ENCODE measurements at regions of chr6 and their contacts with region 1.

Region 1: DNA sequence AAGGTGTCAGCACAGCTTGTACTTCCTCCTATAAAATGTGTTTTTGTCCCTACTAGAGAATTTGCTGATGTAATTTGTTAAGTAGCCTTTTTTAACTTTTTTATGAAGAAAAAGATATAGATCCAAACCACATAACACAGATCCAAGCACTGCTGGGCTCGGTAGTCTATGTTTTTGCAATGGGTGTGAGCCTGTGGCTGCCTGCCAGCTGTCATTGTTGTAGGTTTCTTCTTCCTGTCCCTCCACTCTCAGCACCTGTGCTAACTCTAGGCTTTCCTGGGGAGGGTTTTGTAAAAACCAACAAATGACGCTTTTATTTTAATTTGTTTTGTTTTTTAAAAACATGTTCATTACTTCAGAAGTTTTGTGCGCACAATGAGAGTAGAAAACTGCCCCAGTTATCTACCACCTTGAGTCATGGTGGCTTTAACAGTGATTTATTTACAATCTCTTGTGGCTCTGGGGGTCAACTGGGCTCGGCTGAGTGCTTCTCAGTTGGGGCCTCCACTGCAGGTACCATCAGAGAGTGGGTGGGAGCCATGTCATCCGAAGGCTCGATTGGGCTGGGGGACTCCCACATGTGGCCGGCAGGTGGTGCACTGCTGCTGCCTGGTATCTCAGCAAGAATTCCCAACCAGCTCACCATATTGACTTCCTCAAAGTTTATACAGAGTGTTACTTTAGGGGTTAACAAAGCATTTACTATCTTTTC is 3.1 kb upstream of the CCR6 start:
- DNase-seq: no peak
- ATAC-seq: no peak
- H3K4me3 ChIP-seq: no peak overlapping the region
- H3K27ac ChIP-seq: peak overlapping the region; percentile 66; the same call in 1 of the 2 replicates
- H3K4me1 ChIP-seq: peaks cover 69% of the 10 kb centered on the region
- H3K27me3 ChIP-seq: no peaks in the 10 kb centered on the region
- CTCF ChIP-seq: peak; percentile 18 to 58 (median 56); a peak in 5 of 6 replicates
- EP300 ChIP-seq: no peak
- POLR2A ChIP-seq: no peak
- RAD21 ChIP-seq: peak; percentile 30

Region 2: DNA sequence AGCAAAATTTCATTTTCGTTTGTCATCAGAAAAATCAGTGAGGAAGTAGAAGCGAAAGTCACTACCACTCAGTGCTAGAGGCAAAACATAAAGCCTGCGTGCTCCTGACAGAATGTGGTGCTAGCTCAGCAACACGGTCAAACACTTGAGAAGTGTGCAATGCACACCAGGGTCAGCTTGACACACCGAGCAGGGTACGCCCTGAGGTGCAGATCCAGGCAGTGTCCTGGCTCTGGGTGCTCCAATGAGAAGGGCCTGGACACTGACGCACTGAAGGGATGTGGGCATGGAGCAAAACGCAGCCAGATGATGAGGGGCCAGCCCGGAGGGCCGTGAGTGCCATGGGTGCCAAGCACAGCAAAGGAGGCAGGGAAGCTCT is 169.4 kb before region 1 on chr6:
- CTCF ChIA-PET with region 1: interaction called, 11 read pairs
- POLR2A ChIA-PET with region 1: interaction called, 6 read pairs
- RAD21 ChIA-PET with region 1: interaction called, 22 read pairs
- SMC1A ChIA-PET with region 1: interaction called, 19 read pairs
- in situ Hi-C with region 1: no loop called
- intact Hi-C with region 1: loop called (anchors 10 kb)
- DNase-seq: no peak
- ATAC-seq: peak; percentile 68
- H3K4me3 ChIP-seq: peak overlapping the region; percentile 71
- H3K27ac ChIP-seq: peak overlapping the region; percentile 96
- H3K4me1 ChIP-seq: peaks cover 42% of the 10 kb centered on the region
- H3K27me3 ChIP-seq: no peaks in the 10 kb centered on the region
- CTCF ChIP-seq: no peak
- EP300 ChIP-seq: no peak
- POLR2A ChIP-seq: peak; percentile 76
- RAD21 ChIP-seq: no peak

Region 3: GRCh38 chr6:166977621-166978525 is 142.0 kb before region 1 on chr6:
- CTCF ChIA-PET with region 1: no interaction called
- POLR2A ChIA-PET with region 1: no interaction called
- RAD21 ChIA-PET with region 1: no interaction called
- SMC1A ChIA-PET with region 1: no interaction called
- in situ Hi-C with region 1: no loop called
- intact Hi-C with region 1: no loop called
- DNase-seq: no peak
- ATAC-seq: no peak
- H3K4me3 ChIP-seq: no peak overlapping the region
- H3K27ac ChIP-seq: no peak overlapping the region
- H3K4me1 ChIP-seq: no peaks in the 10 kb centered on the region
- H3K27me3 ChIP-seq: no peaks in the 10 kb centered on the region
- CTCF ChIP-seq: no peak
- EP300 ChIP-seq: no peak
- POLR2A ChIP-seq: no peak
- RAD21 ChIP-seq: no peak

Region 4: GRCh38 chr6:167047554-167047953 is 72.3 kb before region 1 on chr6:
- CTCF ChIA-PET with region 1: interaction called, 15 read pairs
- POLR2A ChIA-PET with region 1: interaction called, 16 read pairs
- RAD21 ChIA-PET with region 1: interaction called, 39 read pairs
- SMC1A ChIA-PET with region 1: interaction called, 22 read pairs
- in situ Hi-C with region 1: no loop called
- intact Hi-C with region 1: no loop called
- DNase-seq: peak; percentile 86
- ATAC-seq: peak; percentile 87
- H3K4me3 ChIP-seq: peak overlapping the region; percentile 36; the same call in 1 of the 2 replicates
- H3K27ac ChIP-seq: peak overlapping the region; percentile 89
- H3K4me1 ChIP-seq: peaks cover 36% of the 10 kb centered on the region
- H3K27me3 ChIP-seq: no peaks in the 10 kb centered on the region
- CTCF ChIP-seq: no peak
- EP300 ChIP-seq: peak; percentile 74 to 77; a peak in 3 of 4 replicates
- POLR2A ChIP-seq: no peak
- RAD21 ChIP-seq: no peak

Region 5: DNA sequence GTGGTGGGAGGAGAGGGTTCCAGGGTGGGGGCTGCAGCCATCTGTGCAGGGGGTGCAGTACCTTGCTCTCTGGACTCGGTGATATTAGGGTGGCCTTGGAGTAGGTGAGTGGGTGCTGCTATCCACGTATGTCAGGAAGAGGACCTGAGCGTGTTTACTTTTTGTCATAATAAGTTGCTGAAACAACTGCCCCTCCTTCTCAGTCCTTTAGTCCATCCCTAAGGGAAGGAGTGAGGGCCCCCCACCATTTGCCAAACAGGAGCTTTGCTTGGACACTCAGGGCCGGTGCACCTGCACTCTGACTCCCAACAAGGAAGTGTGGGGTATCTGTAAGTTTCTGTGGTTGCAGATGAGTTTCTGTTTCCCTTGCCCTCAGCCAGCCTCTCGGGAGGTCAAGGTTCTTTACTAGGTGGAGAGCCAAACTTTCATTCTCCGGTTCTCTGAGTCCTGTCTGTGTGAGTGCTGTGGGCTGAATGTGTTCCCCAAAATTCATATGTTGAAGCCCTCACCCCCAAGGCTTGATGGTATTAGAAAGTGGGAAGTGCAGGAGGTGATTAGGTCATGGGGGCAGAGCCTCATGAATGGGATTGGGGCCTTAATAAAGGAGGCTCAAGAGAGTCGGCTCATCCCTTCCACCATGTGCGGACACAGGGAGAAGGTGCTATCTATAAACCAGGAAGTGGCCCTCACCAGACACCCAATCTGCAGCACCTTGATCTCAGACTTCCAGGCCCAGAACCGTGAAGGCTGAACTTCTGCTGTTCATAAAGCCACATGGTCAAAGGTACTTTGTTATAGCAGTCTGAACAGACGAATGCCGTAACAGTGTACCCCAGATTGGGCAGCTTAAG is 16.6 kb before region 1 on chr6:
- CTCF ChIA-PET with region 1: interaction called, 20 read pairs
- POLR2A ChIA-PET with region 1: interaction called, 17 read pairs
- RAD21 ChIA-PET with region 1: interaction called, 9 read pairs
- SMC1A ChIA-PET with region 1: interaction called, 14 read pairs
- in situ Hi-C with region 1: no loop called
- intact Hi-C with region 1: no loop called
- DNase-seq: no peak
- ATAC-seq: peak; percentile 92
- H3K4me3 ChIP-seq: no peak overlapping the region
- H3K27ac ChIP-seq: peak overlapping the region; percentile 60
- H3K4me1 ChIP-seq: peaks cover 31% of the 10 kb centered on the region
- H3K27me3 ChIP-seq: no peaks in the 10 kb centered on the region
- CTCF ChIP-seq: no peak
- EP300 ChIP-seq: peak; percentile 34 to 56; a peak in 2 of 4 replicates
- POLR2A ChIP-seq: no peak
- RAD21 ChIP-seq: no peak

Region 6: GRCh38 chr6:167153521-167153959 is 33.7 kb after region 1 on chr6:
- CTCF ChIA-PET with region 1: interaction called, 4 read pairs
- POLR2A ChIA-PET with region 1: interaction called, 22 read pairs
- RAD21 ChIA-PET with region 1: interaction called, 22 read pairs
- SMC1A ChIA-PET with region 1: interaction called, 36 read pairs
- in situ Hi-C with region 1: no loop called
- intact Hi-C with region 1: loop called (anchors 2 kb)
- DNase-seq: peak; percentile 78
- ATAC-seq: peak; percentile 71
- H3K4me3 ChIP-seq: peak overlapping the region; percentile 54
- H3K27ac ChIP-seq: peak overlapping the region; percentile 70
- H3K4me1 ChIP-seq: peaks cover 30% of the 10 kb centered on the region
- H3K27me3 ChIP-seq: no peaks in the 10 kb centered on the region; a peak in 1 of 4 replicates
- CTCF ChIP-seq: no peak
- EP300 ChIP-seq: peak; percentile 81; a peak in 3 of 4 replicates
- POLR2A ChIP-seq: no peak
- RAD21 ChIP-seq: no peak

Region 7: DNA sequence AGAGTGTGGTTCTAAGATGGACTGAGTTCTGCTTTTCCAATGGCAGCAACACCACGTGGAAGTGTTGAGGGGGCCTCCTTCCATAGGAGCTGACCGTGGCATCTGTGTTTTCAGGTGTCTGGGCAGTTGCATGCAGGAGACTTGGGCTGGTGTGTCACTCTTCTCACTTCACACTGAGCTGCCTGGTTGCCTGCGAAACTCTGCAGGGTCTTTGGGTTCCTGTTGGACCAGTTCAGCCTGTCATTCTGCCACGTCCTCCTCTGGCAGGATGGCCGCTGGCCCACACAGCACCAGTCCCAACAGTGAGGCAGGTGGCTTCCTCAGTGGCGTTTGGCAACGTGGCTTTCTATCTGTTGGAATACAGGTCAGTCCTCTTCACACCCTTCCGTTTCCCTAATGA is 155.2 kb after region 1 on chr6:
- CTCF ChIA-PET with region 1: no interaction called
- POLR2A ChIA-PET with region 1: no interaction called
- RAD21 ChIA-PET with region 1: no interaction called
- SMC1A ChIA-PET with region 1: no interaction called
- in situ Hi-C with region 1: no loop called
- intact Hi-C with region 1: no loop called
- DNase-seq: no peak
- ATAC-seq: no peak
- H3K4me3 ChIP-seq: no peak overlapping the region
- H3K27ac ChIP-seq: no peak overlapping the region
- H3K4me1 ChIP-seq: no peaks in the 10 kb centered on the region
- H3K27me3 ChIP-seq: peaks cover 0 to 5% of the 10 kb centered on the region in 2 experiments
- CTCF ChIP-seq: no peak
- EP300 ChIP-seq: no peak
- POLR2A ChIP-seq: no peak
- RAD21 ChIP-seq: no peak